PC-3 (cell line): ENCODE measurements at regions of chr3 and their contacts with region 1.

Region 1: DNA sequence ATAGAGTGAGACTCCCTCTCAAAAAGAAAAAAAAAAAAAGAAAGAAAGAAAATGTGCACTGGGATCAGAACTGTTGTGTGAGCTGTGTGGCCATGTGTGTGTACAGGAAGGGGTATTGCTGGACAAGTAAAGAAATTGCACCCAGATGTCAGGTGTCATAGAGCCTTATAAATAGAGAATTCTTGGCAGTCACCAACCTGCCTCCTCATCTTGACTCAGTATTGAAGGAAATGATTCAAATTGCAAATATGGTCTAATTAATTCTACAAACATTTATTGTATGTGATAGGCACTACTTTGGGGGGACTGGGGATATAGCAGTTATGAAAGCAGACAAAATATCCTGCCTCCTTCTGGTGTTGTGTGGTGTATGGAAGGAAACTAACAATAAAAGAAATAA is 243.8 kb upstream of the TTC14 start:
- DNase-seq: peak; percentile 92
- ATAC-seq: peak; percentile 97
- H3K4me3 ChIP-seq: no peak overlapping the region
- H3K27ac ChIP-seq: peak overlapping the region; percentile 61
- H3K4me1 ChIP-seq: peaks cover 24% of the 10 kb centered on the region
- H3K27me3 ChIP-seq: no peaks in the 10 kb centered on the region
- CTCF ChIP-seq: peak; percentile 52

Region 2: GRCh38 chr3:180036671-180037455 is 321.3 kb before region 1 on chr3 and contains the start of gene PEX5L:
- CTCF ChIA-PET with region 1: no interaction called
- POLR2A ChIA-PET with region 1: no interaction called
- intact Hi-C with region 1: loop called (anchors 10 kb)
- DNase-seq: peak; percentile 77
- ATAC-seq: peak; percentile 95
- H3K4me3 ChIP-seq: peak within 1 kb of the TSS; percentile 65
- H3K27ac ChIP-seq: no peak within 1 kb of the TSS
- H3K4me1 ChIP-seq: no peaks in the 10 kb centered on the region
- H3K27me3 ChIP-seq: no peaks in the 10 kb centered on the region
- CTCF ChIP-seq: no peak
- total RNA-seq, gene PEX5L: 0.69 and 0.86 TPM in 2 replicates

Region 3: GRCh38 chr3:180277041-180277440 is 81.1 kb before region 1 on chr3:
- CTCF ChIA-PET with region 1: no interaction called
- POLR2A ChIA-PET with region 1: interaction called, 4 read pairs
- intact Hi-C with region 1: loop called (anchors 1 kb)
- DNase-seq: peak; percentile 85
- ATAC-seq: peak; percentile 82
- H3K4me3 ChIP-seq: no peak overlapping the region
- H3K27ac ChIP-seq: peak overlapping the region; percentile 62
- H3K4me1 ChIP-seq: peaks cover 54% of the 10 kb centered on the region
- H3K27me3 ChIP-seq: no peaks in the 10 kb centered on the region
- CTCF ChIP-seq: no peak

Region 4: DNA sequence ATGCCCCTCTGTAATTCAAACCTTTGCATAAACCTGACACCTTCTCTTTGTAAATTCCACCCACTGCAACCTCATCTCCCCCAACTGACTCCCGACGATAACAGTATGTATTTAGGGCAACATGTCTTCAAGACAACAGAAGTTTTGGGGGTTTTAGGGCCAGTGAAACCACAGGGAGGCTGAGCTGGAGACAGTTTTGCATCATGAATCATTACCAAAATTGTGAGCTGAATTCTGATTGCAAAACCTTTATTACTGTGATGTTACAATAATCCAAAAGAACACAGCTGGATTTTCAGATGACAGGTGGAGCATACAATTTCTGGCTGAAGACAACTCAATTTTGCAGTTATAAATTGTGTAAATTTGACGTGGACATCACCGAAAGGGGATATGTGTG is 37.5 kb before region 1 on chr3:
- CTCF ChIA-PET with region 1: no interaction called
- POLR2A ChIA-PET with region 1: no interaction called
- intact Hi-C with region 1: loop called (anchors 2 kb)
- DNase-seq: no peak
- ATAC-seq: no peak
- H3K4me3 ChIP-seq: no peak overlapping the region
- H3K27ac ChIP-seq: no peak overlapping the region
- H3K4me1 ChIP-seq: peaks cover 20% of the 10 kb centered on the region
- H3K27me3 ChIP-seq: no peaks in the 10 kb centered on the region
- CTCF ChIP-seq: no peak

Region 5: GRCh38 chr3:180421221-180421620 is 63.0 kb after region 1 on chr3:
- CTCF ChIA-PET with region 1: no interaction called
- POLR2A ChIA-PET with region 1: no interaction called
- intact Hi-C with region 1: loop called (anchors 1 kb)
- DNase-seq: peak; percentile 33
- ATAC-seq: peak; percentile 11; the same call in 1 of the 2 replicates
- H3K4me3 ChIP-seq: no peak overlapping the region; the same call in 1 of the 2 replicates
- H3K27ac ChIP-seq: peak overlapping the region; percentile 92
- H3K4me1 ChIP-seq: peaks cover 52% of the 10 kb centered on the region
- H3K27me3 ChIP-seq: no peaks in the 10 kb centered on the region
- CTCF ChIP-seq: no peak